ENCODE measurements at regions of chr14 and their contacts with region 1.

Region 1: DNA sequence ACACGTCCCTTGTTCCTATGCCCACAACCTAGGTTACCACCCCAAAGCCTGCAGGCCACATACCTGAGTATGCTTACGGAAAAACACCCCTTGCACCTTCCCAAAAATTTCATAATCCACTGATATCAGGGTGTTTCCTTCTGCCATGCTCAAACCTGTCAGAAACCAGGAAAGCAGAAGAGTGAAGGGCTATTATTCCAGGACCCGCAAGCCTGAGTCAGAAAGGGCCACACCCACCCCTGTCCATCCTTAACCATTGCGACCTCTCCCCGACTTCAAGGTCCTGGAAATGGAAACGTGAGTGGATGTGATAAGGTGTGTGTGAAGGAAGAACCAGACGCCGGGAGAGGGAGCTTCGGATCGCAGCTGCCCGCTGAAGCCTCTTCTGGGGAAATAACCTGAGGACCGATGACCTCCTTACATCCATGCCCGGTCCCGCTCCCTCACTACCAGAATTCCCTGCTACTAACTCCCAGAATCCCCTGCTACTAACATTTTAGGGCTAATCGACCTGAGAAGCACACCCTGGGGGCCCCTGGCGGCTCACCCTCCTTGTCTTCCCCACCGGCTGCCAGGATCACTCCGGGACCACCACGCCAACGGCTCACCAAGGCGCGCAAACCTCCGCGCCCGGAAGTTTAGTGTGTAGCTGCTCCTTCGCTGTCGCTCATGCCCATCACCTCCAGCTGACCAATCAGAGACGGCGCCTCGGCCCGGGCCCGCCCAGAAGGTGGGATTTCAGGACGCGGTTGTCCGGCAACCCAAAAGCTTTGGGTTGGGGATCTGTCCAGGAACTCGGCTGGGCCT is at the start of gene ACYP1:
- DNase-seq: peak; percentile 97
- ATAC-seq: peak; percentile 98
- H3K4me3 Mint-ChIP-seq: peak within 1 kb of the TSS; percentile 96
- H3K27ac Mint-ChIP-seq: peak within 1 kb of the TSS; percentile 79
- H3K4me1 Mint-ChIP-seq: peaks cover 14% of the 10 kb centered on the region
- H3K27me3 Mint-ChIP-seq: no peaks in the 10 kb centered on the region
- CTCF ChIP-seq: no peak
- total RNA-seq, gene ACYP1: 22.4 to 26.6 TPM (median 23.0 TPM) in 3 replicates

Region 2: DNA sequence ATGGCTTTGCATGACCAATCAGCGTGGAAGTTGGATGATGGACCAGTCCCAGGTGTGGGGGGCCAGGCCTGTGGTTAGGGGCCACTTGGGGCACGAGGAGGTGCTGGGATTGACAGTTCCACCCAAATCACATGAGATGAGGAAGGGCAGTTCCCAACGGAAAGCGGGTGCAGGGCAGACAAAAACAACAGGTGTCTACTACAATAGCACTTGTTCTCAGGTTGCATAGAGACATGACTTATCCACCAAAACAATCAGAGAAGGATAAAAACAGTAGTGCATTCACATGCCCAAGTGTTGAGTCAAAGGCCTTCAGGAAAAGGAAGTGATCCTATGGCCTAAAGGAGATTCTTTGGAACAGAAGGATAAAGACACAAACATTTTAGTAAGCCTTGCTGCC is 75.5 kb before region 1 on chr14:
- CTCF ChIA-PET with region 1: no interaction called
- POLR2A ChIA-PET with region 1: no interaction called
- DNase-seq: no peak
- ATAC-seq: no peak
- H3K4me3 Mint-ChIP-seq: no peak overlapping the region
- H3K27ac Mint-ChIP-seq: no peak overlapping the region
- H3K4me1 Mint-ChIP-seq: peaks cover 8% of the 10 kb centered on the region
- H3K27me3 Mint-ChIP-seq: no peaks in the 10 kb centered on the region
- CTCF ChIP-seq: no peak

Region 3: GRCh38 chr14:75088574-75089373 is 25.2 kb after region 1 on chr14:
- CTCF ChIA-PET with region 1: interaction called, 13 read pairs
- POLR2A ChIA-PET with region 1: no interaction called
- DNase-seq: peak; percentile 36
- ATAC-seq: peak; percentile 82
- H3K4me3 Mint-ChIP-seq: no peak overlapping the region
- H3K27ac Mint-ChIP-seq: peak overlapping the region; percentile 53; the same call in 1 of the 2 replicates
- H3K4me1 Mint-ChIP-seq: peaks cover 6% of the 10 kb centered on the region
- H3K27me3 Mint-ChIP-seq: no peaks in the 10 kb centered on the region
- CTCF ChIP-seq: no peak; the same call in 1 of the 2 replicates

Measured in WTC11 (cell line).